Esophagus muscularis mucosa (tissue), 4 donors: ENCODE measurements at regions of chr15 and their contacts with region 1.

Region 1: DNA sequence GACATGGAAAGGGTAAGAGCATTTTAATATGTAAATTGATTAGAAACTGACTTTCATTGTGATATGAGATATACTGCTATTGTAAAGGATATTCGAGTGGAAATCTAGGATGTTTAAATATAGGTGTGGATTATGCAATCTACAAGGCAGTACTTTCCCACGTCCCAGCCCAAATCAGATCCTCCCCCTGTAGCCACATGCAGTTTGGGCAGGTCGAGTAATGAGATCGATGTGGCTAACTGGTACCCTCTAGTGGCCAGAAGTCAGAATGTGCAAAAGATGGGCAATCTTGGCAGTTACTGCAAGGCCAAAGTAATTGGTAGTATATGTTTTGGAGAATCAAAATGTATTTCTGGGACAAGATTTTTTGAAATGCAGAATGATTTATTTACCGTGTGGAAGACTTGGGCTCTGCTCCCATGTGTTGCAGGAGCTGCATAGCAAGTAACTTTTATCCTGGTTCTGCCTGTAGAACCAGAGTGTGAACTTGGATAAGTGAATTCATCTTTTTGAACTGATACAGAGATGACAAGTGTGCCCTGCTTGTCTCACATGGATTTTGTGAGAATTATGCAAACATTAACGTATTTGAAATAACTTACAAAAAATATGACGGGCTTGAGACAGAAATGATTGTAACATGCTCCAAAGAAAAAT is 94.5 kb upstream of the ADAMTSL3 start:
- DNase-seq: peak; percentile 89
- H3K4me3 ChIP-seq: no peak overlapping the region
- H3K27ac ChIP-seq: no peak overlapping the region
- H3K4me1 ChIP-seq: peaks cover 0 to 3% (median 0%) of the 10 kb centered on the region in 4 donors
- H3K27me3 ChIP-seq: peaks cover 0 to 7% (median 0%) of the 10 kb centered on the region in 4 donors
- CTCF ChIP-seq: peak; percentile 74 to 79 (median 75)
- EP300 ChIP-seq: no peak
- POLR2A ChIP-seq: no peak

Region 2: GRCh38 chr15:83248151-83249029 is 311.0 kb before region 1 on chr15:
- intact Hi-C with region 1: loop called (anchors 5 kb)
- DNase-seq: no peak
- H3K4me3 ChIP-seq: no peak overlapping the region
- H3K27ac ChIP-seq: no peak overlapping the region
- H3K4me1 ChIP-seq: peaks cover 0 to 5% (median 2%) of the 10 kb centered on the region in 4 donors
- H3K27me3 ChIP-seq: peaks cover 0 to 41% (median 0%) of the 10 kb centered on the region in 4 donors
- CTCF ChIP-seq: peak; percentile 91 to 97 (median 92)
- EP300 ChIP-seq: no peak
- POLR2A ChIP-seq: no peak

Region 3: DNA sequence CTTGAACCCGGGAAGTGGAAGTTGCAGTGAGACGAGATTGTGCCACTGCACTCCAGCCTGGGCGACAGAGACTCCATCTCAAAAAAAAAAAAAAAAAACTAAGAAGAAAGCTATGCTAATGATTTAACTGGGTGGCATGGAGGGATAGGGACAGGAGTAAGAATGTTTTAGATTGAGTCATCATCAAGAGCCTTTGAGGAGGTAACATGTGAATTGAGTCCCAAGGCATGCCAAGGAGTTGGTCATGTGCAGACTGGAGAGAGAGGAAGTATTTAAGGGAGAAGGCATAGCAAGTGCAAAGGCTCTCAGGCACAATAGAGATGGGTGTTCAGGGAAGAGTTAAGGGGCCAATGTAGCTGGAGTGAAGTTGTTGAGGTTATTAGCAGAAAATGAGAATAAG is 284.0 kb before region 1 on chr15:
- intact Hi-C with region 1: no loop called
- DNase-seq: peak; percentile 45
- H3K4me3 ChIP-seq: no peak overlapping the region
- H3K27ac ChIP-seq: no peak overlapping the region
- H3K4me1 ChIP-seq: no peaks in the 10 kb centered on the region
- H3K27me3 ChIP-seq: peaks cover 0 to 53% (median 2%) of the 10 kb centered on the region in 4 donors
- CTCF ChIP-seq: no peak
- EP300 ChIP-seq: no peak
- POLR2A ChIP-seq: no peak

Region 4: GRCh38 chr15:83436458-83437158 is 122.8 kb before region 1 on chr15:
- intact Hi-C with region 1: loop called (anchors 2 kb)
- DNase-seq: peak; percentile 80
- H3K4me3 ChIP-seq: no peak overlapping the region
- H3K27ac ChIP-seq: no peak overlapping the region
- H3K4me1 ChIP-seq: no peaks in the 10 kb centered on the region
- H3K27me3 ChIP-seq: peaks cover 0 to 20% (median 0%) of the 10 kb centered on the region in 4 donors
- CTCF ChIP-seq: peak; percentile 7 to 22 (median 22)
- EP300 ChIP-seq: no peak
- POLR2A ChIP-seq: no peak

Region 5: DNA sequence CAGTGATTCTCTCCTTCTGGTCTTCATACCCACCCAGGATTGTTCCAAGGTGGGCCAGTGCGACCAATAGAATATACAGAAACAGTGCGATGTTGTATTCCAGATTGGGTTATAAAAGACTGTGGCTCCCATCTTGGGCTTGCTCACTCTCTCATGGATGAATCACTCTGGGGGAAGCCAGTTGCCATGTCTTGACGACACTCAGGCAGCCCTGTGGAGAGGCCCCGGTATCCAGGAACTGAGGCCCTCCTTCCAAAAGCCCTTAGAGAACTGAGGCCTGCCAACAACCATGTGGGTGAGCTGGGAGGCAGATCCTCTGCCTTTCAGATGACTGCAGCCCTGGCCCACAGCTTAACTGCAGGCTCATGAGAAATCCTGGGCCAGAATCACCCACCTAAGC is 55.1 kb before region 1 on chr15:
- intact Hi-C with region 1: no loop called
- DNase-seq: no peak
- H3K4me3 ChIP-seq: no peak overlapping the region
- H3K27ac ChIP-seq: no peak overlapping the region
- H3K4me1 ChIP-seq: no peaks in the 10 kb centered on the region
- H3K27me3 ChIP-seq: no peaks in the 10 kb centered on the region
- CTCF ChIP-seq: no peak
- EP300 ChIP-seq: no peak
- POLR2A ChIP-seq: no peak

Region 6: DNA sequence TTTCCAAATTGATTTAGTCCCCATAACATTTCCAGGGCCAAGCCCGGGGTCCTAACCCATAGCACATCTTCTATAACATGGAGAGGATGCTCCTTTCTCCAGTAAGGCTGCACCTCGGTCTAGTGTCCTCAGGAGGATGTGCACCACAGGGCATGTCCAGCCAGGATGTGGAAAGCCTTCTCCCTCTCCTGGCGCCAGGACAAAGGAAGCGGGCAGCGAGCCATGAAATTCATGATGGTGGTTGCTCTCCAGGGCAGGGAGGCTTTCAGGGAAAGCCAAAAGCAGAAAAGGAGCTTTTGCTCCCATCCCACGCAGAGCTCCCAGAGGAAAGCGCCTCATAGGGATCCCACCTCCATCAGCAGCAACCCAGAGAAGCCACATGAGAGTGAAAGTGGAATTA is 314.5 kb after region 1 on chr15:
- intact Hi-C with region 1: no loop called
- DNase-seq: no peak
- H3K4me3 ChIP-seq: no peak overlapping the region
- H3K27ac ChIP-seq: no peak overlapping the region
- H3K4me1 ChIP-seq: peaks cover 11 to 23% (median 16%) of the 10 kb centered on the region in 4 donors
- H3K27me3 ChIP-seq: no peaks in the 10 kb centered on the region
- CTCF ChIP-seq: no peak
- EP300 ChIP-seq: no peak
- POLR2A ChIP-seq: no peak

Region 7: GRCh38 chr15:84023636-84024035 is 464.2 kb after region 1 on chr15:
- intact Hi-C with region 1: loop called (anchors 10 kb)
- DNase-seq: peak; percentile 31
- H3K4me3 ChIP-seq: no peak overlapping the region
- H3K27ac ChIP-seq: no peak overlapping the region
- H3K4me1 ChIP-seq: no peaks in the 10 kb centered on the region
- H3K27me3 ChIP-seq: no peaks in the 10 kb centered on the region
- CTCF ChIP-seq: peak; percentile 48 to 64 (median 55)
- EP300 ChIP-seq: no peak
- POLR2A ChIP-seq: no peak